ENCODE measurements at regions of chr2 and their contacts with region 1.

Region 1: DNA sequence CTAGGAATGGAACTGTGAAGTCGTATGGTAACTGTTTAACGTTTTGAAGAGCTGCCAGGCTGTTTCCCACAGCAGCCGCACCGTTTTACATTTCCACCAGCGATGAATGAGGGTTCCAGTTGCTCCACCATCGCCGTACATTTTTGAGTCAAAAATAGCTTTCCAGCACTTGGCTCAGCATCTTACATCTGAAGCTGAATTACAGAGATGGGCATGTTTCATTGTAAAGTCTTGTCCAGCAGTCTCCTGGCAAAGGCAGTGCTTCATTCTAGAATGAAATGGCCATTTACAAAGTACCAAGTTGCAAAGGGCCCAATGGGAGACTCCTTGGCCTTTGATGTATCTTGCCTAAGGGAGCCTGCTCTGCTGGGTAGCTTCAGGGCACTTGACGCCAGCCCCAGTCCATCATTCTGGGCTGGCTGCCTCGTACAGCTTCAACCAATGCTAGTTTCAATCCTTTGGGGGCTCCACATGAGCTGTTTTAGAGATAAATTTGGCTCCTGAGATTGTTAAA is 45.1 kb downstream of the ATIC start:
- DNase-seq: no peak
- ATAC-seq: no peak
- H3K4me3 ChIP-seq: no peak overlapping the region
- H3K27ac ChIP-seq: no peak overlapping the region
- H3K4me1 ChIP-seq: peaks cover 0 to 5% of the 10 kb centered on the region in 2 experiments; a peak in 3 of 5 replicates
- H3K27me3 ChIP-seq: no peaks in the 10 kb centered on the region
- CTCF ChIP-seq: no peak
- EP300 ChIP-seq: no peak
- POLR2A ChIP-seq: no peak
- RAD21 ChIP-seq: no peak

Region 2: DNA sequence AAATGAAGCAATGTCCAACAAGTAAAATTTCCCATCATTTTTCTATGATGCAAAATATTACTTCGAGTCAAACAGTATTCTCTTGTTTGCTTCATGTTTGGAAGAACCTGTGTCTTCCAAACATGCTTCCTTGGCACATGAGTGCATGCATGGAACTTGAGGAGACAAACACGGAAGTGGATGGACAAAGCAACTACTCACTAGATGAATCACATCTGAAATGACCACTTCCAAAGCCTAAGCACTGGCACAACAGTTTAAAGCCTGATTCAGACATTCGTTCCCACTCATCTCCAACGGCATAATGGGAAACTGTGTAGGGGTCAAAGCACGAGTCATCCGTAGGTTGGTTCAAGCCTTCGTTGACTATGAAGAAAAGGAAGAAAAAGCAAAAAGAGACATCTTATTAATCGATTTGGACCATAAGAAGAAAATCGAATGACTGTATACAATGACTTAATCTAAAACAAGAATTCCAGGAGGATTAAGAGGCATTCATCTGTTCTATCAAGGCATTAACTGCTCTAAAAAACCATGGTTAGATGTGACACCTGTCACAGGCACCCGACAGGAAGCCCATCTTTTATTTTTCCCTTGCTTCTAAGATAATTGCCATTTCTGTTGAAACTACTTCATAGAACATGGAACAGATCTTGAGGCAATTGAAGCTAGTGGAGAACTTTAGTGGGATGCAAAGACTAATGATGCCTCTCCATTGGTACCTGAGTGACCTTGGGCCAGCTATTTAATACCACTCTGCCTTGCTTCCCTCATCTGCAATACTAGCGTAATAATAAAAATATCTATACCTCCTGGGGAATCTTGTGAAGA is 10.9 kb after region 1 on chr2:
- CTCF ChIA-PET with region 1: no interaction called
- POLR2A ChIA-PET with region 1: no interaction called
- in situ Hi-C with region 1: no loop called
- intact Hi-C with region 1: no loop called
- DNase-seq: no peak
- ATAC-seq: no peak
- H3K4me3 ChIP-seq: no peak overlapping the region
- H3K27ac ChIP-seq: no peak overlapping the region
- H3K4me1 ChIP-seq: no peaks in the 10 kb centered on the region; a peak in 1 of 5 replicates
- H3K27me3 ChIP-seq: no peaks in the 10 kb centered on the region
- CTCF ChIP-seq: no peak
- EP300 ChIP-seq: no peak
- POLR2A ChIP-seq: no peak
- RAD21 ChIP-seq: no peak

Region 3: DNA sequence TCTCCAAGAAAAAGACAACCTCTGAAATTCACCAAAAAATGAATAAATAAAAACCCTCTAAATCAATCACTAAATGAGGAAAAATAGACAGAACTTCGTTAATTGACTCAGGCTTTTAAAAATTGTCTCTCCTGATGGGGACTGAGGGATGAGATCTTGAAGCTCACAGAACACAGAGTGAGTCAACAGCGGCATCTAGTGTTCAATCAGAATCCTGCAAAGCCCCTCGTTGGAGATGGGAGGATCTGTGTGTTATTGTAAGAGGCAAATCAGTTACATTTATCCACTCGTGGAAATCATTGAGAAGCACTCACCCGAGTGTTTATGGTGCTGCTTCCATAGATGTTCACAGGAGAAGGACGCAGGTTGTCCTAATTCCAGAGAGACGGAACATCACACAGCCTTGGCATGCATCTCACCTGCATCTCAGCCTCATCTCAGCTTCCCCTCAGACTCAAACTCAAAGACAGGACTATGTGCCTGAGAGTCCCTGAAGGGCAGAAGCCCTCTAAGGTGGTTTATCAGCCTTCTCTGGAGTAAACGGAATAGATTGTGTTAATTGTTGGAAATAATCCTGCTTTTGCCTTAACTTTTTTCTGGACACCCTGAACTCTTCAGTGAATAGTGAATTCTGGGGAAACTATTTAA is 574.4 kb after region 1 on chr2:
- CTCF ChIA-PET with region 1: no interaction called
- POLR2A ChIA-PET with region 1: no interaction called
- in situ Hi-C with region 1: no loop called
- intact Hi-C with region 1: loop called (anchors 10 kb)
- DNase-seq: peak; percentile 49 to 78 (median 54)
- ATAC-seq: peak; percentile 91
- H3K4me3 ChIP-seq: no peak overlapping the region
- H3K27ac ChIP-seq: no peak overlapping the region
- H3K4me1 ChIP-seq: peaks cover 0 to 16% of the 10 kb centered on the region in 2 experiments; a peak in 3 of 5 replicates
- H3K27me3 ChIP-seq: no peaks in the 10 kb centered on the region
- CTCF ChIP-seq: peak; percentile 67 to 82 (median 80)
- EP300 ChIP-seq: no peak
- POLR2A ChIP-seq: no peak
- RAD21 ChIP-seq: peak; percentile 87 to 88